ENCODE measurements at regions of chr17 and their contacts with region 1.

Region 1: DNA sequence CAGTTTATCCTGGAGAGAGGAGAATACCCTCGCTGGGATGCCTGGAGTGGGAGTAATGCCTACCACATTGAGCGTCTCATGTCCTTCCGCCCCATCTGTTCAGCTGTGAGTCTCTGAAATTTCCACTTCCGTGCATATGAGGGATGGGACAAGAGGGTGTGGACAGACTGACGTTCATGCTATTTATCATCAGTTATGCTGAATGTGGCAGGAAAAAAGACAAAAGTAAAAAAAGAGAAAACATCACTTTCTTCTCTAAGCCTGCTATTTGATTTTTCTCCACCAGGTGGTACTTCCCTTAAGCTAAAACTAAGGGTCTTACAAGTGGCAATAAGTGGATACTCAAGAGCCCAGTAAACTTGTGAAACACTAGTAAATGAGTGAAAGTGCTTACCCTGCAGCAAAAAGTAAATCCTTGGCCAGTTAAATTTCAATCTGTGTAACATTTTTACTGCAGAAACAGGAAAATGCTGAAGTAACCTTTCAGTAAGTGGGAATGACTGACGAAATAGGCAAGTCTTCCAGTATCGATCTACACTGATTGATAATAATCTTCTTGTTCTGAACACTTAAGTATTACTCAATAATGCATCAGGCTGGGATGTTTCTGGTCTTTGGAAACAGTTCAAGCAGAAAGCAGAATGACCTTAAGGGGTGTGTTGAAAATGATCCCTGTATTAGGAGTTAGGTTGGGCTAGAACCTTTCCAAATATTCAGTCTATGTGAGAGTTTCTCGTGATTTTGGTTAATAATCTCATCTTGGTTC is 5.6 kb downstream of the CRYBA1 start:
- DNase-seq: no peak
- ATAC-seq: no peak
- H3K4me3 Mint-ChIP-seq: no peak overlapping the region
- H3K27ac Mint-ChIP-seq: no peak overlapping the region
- H3K4me1 Mint-ChIP-seq: peaks cover 4% of the 10 kb centered on the region
- H3K27me3 Mint-ChIP-seq: no peaks in the 10 kb centered on the region

Region 2: GRCh38 chr17:29241015-29241963 is 11.0 kb before region 1 on chr17:
- CTCF ChIA-PET with region 1: interaction called, 15 read pairs
- POLR2A ChIA-PET with region 1: no interaction called
- DNase-seq: no peak
- ATAC-seq: no peak
- H3K4me3 Mint-ChIP-seq: no peak overlapping the region
- H3K27ac Mint-ChIP-seq: no peak overlapping the region
- H3K4me1 Mint-ChIP-seq: peaks cover 11% of the 10 kb centered on the region
- H3K27me3 Mint-ChIP-seq: no peaks in the 10 kb centered on the region

Region 3: GRCh38 chr17:29401258-29401657 is 149.0 kb after region 1 on chr17:
- CTCF ChIA-PET with region 1: no interaction called
- POLR2A ChIA-PET with region 1: no interaction called
- DNase-seq: no peak
- ATAC-seq: no peak
- H3K4me3 Mint-ChIP-seq: no peak overlapping the region
- H3K27ac Mint-ChIP-seq: no peak overlapping the region
- H3K4me1 Mint-ChIP-seq: peaks cover 5% of the 10 kb centered on the region
- H3K27me3 Mint-ChIP-seq: no peaks in the 10 kb centered on the region